ENCODE measurements at regions of chr2 and their contacts with region 1.

Region 1: DNA sequence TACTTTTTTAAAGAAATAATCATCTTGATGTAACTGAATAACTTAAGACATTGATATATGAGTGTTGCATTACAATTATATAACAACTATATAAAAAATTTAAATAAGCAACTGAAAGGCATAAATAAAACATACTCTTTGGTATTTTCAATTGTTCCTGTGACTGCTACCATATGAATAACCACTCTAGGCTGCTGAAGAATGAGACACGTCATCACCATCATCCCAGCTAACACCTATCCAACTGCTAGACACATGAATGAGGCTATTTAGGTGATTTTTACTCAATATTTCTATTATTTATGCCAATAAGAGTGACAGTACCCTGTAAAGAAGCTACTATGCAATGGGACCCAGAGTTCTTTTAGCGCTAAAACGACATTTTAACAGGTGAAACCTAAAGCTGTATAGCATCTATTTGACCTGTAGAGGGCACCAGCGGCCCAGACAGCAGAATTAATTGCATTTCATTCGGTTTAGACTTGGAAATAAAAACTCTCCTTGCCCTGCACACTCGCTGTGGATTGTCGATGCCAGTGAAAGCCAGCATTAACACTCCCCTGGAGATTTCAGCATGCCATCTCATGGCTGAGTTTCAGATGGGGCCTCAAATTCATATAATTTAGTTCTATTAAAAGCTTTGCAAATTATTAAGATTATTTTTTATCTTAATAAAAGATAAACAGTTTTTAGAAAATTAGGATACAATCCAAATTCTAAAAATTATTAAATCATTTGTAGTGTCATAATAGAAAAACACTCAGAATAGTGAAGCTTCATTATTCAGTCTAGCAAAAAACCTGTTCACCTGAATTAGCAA is 89.4 kb upstream of the MAP2 start:
- DNase-seq: peak in 2 of 5 donors; percentile 2 to 5
- H3K4me3 ChIP-seq: no peak overlapping the region
- H3K4me3 Mint-ChIP-seq: no peak overlapping the region
- H3K27ac ChIP-seq: no peak overlapping the region
- H3K27ac Mint-ChIP-seq: no peak overlapping the region
- H3K4me1 ChIP-seq: no peaks in the 10 kb centered on the region
- H3K4me1 Mint-ChIP-seq: no peaks in the 10 kb centered on the region
- H3K27me3 ChIP-seq: no peaks in the 10 kb centered on the region
- H3K27me3 Mint-ChIP-seq: no peaks in the 10 kb centered on the region

Region 2: GRCh38 chr2:209422305-209422704 is 87.9 kb after region 1 on chr2:
- CTCF ChIA-PET with region 1: no interaction called
- POLR2A ChIA-PET with region 1: no interaction called
- intact Hi-C with region 1: no loop called
- DNase-seq: peak in 1 of 5 donors; percentile 13
- H3K4me3 ChIP-seq: no peak overlapping the region
- H3K4me3 Mint-ChIP-seq: no peak overlapping the region
- H3K27ac ChIP-seq: no peak overlapping the region
- H3K27ac Mint-ChIP-seq: no peak overlapping the region
- H3K4me1 ChIP-seq: peaks cover 9% of the 10 kb centered on the region
- H3K4me1 Mint-ChIP-seq: peaks cover 5 to 15% (median 10%) of the 10 kb centered on the region in 4 donors
- H3K27me3 ChIP-seq: no peaks in the 10 kb centered on the region
- H3K27me3 Mint-ChIP-seq: peaks cover 19 to 22% of the 10 kb centered on the region in 2 donors

Region 3: DNA sequence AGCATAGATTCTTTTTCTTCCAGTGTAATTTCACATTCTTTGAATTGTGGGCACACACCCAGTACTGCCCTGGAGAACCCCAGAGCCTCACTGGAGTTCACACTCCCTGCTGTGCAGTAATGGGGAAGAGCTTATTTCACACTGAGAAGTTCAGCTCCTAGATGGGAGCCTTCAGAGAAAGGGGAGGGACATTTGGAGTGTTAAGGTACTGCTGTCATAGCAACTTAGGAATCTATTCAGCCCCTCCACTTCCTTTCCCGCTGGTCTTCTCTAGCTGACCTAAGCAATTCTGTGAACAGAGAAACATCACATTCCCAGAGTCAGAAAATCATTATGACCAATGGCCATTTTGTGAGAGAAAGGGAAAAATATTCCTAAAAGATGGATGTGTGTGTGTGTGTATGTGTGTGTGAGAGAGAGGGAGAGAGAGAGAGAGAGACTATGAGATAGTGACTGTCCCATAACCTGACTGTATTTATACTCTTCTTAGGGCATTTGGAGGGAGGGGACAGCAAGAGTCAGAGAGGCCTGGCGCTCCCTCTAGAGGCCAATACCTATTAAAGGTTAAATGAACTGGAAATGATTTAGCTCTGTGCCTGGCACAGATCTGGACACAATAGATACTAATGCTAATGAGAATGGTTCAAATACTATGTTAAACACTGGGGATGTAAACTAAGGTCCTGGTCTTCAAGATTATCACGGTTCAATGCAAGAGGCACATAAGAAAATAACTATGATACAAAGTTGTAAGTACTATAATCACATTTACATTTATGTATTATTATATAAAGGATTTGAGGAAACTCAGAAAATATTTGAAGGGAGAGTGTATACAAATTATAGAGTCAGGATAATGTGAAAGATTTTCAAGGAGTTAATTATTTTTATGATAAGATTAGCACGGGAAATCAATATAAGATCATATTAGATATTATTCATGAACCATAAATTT is 626.5 kb after region 1 on chr2:
- CTCF ChIA-PET with region 1: no interaction called
- POLR2A ChIA-PET with region 1: no interaction called
- intact Hi-C with region 1: loop called (anchors 10 kb)
- DNase-seq: peak in 4 of 5 donors; percentile 13 to 21 (median 17)
- H3K4me3 ChIP-seq: no peak overlapping the region
- H3K4me3 Mint-ChIP-seq: no peak overlapping the region
- H3K27ac ChIP-seq: no peak overlapping the region
- H3K27ac Mint-ChIP-seq: no peak overlapping the region
- H3K4me1 ChIP-seq: no peaks in the 10 kb centered on the region
- H3K4me1 Mint-ChIP-seq: no peaks in the 10 kb centered on the region
- H3K27me3 ChIP-seq: no peaks in the 10 kb centered on the region
- H3K27me3 Mint-ChIP-seq: peaks cover 0 to 3% of the 10 kb centered on the region in 2 donors

Region 4: DNA sequence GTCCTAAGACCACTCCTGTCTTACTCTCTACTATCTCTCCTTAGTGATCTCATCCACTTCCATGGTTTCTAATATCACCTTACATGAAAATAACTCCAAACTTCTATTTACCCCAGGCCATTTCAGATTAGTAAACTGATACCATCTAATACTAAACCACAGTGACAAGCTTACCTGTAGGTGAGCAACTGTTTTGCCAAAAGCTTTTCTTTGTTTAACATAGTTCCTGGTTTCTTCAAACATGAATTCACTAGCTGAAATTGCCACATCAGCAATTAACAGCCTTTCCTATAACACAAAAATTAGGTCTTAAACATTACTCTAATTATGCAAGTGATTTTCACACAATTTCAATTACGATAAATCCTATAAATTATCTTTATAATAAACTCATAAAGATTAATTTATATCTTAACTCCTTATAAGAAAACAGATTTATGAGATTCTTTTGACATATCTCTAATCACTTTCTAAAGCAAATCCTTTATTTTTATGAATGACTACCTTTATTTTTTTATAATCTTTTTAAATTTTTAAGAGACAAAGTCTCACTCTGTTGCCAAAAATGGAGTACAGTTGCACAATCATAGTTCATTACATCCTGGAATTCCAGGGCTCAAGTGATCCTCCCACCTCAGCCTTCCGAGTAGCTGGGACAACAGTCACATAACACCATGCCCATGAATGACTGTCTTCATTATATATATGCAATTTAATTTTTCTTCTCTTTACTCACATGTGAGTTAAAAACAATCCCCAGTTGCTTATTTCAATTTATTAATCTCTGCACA is 868.9 kb after region 1 on chr2:
- CTCF ChIA-PET with region 1: interaction called, 4 read pairs
- POLR2A ChIA-PET with region 1: no interaction called
- intact Hi-C with region 1: loop called (anchors 5 kb)
- DNase-seq: no peak
- H3K4me3 ChIP-seq: no peak overlapping the region
- H3K4me3 Mint-ChIP-seq: no peak overlapping the region
- H3K27ac ChIP-seq: no peak overlapping the region
- H3K27ac Mint-ChIP-seq: no peak overlapping the region
- H3K4me1 ChIP-seq: no peaks in the 10 kb centered on the region
- H3K4me1 Mint-ChIP-seq: no peaks in the 10 kb centered on the region
- H3K27me3 ChIP-seq: no peaks in the 10 kb centered on the region
- H3K27me3 Mint-ChIP-seq: peaks cover 14 to 17% of the 10 kb centered on the region in 2 donors